Psoas muscle (tissue), 8 donors: ENCODE measurements at regions of chr3 and their contacts with region 1.

Region 1: DNA sequence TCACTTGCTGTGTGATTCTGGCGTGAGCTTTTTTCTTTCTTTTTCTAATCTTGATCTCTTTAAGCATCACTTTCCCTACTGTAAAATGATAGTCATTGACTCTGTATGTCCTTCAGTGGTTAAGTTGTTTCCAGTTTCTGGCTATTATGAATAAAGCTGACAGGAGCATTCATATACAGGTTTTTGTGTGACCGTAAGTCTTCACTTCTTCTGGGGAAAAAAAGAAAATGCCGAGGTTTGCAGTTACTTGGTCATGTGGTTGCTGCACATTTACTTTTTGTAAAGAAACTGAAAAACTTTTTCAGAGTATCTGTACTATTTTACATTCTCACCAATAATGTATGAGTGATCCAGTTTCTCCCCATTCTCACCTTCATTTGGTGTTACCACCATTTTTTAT is 247.4 kb upstream of the RBMS3 start:
- DNase-seq: no peak
- ATAC-seq: no peak
- H3K4me3 ChIP-seq: no peak overlapping the region
- H3K27ac ChIP-seq: no peak overlapping the region
- H3K4me1 ChIP-seq: no peaks in the 10 kb centered on the region
- H3K27me3 ChIP-seq: no peaks in the 10 kb centered on the region
- CTCF ChIP-seq: no peak

Region 2: DNA sequence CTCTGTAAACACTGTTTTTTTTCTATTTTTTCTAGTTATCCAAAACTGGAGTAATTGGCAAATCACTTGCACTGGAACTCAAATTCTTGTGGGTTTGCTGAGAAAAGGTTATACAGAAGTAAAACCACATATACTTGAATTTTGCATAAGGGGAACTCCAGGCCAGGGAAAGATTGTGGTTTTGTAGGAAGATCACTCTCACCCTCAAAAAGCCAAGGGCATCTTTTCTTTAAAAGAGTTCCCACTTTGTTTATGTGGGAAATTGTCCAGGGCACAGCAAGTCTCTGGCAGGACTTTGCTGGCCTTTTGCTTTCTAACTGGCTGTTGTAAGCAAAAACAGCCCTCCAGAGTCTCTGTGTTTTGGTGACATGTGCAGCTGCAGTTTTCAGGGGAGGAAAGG is 93.0 kb before region 1 on chr3:
- intact Hi-C with region 1: loop called in 1 of 2 experiments (anchors 10 kb)
- DNase-seq: no peak
- ATAC-seq: peak in 1 of 4 donors; percentile 51
- H3K4me3 ChIP-seq: no peak overlapping the region
- H3K27ac ChIP-seq: no peak overlapping the region
- H3K4me1 ChIP-seq: peaks cover 17% of the 10 kb centered on the region
- H3K27me3 ChIP-seq: no peaks in the 10 kb centered on the region
- CTCF ChIP-seq: no peak

Region 3: GRCh38 chr3:28972921-28973320 is 60.6 kb before region 1 on chr3:
- intact Hi-C with region 1: no loop called
- DNase-seq: no peak
- ATAC-seq: no peak
- H3K4me3 ChIP-seq: no peak overlapping the region
- H3K27ac ChIP-seq: no peak overlapping the region
- H3K4me1 ChIP-seq: no peaks in the 10 kb centered on the region
- H3K27me3 ChIP-seq: no peaks in the 10 kb centered on the region
- CTCF ChIP-seq: no peak